Activated CD8-positive, alpha-beta T cell treated with anti-CD3 and anti-CD28 coated beads for 36 hours (primary cell): ENCODE measurements at regions of chr10 and their contacts with region 1.

Region 1: GRCh38 chr10:5977471-5978229 is at the start of gene IL15RA:
- DNase-seq: peak; percentile 94
- ATAC-seq: peak; percentile 73
- H3K4me3 Mint-ChIP-seq: peak within 1 kb of the TSS; percentile 95
- H3K27ac Mint-ChIP-seq: peak within 1 kb of the TSS; percentile 97
- H3K4me1 Mint-ChIP-seq: peaks cover 30% of the 10 kb centered on the region
- H3K27me3 Mint-ChIP-seq: peaks cover 7% of the 10 kb centered on the region
- CTCF ChIP-seq: peak; percentile 15
- total RNA-seq, gene IL15RA: 23.5 to 25.1 TPM

Region 2: GRCh38 chr10:5862360-5862961 is 115.2 kb before region 1 on chr10:
- CTCF ChIA-PET with region 1: no interaction called
- POLR2A ChIA-PET with region 1: no interaction called
- intact Hi-C with region 1: no loop called
- DNase-seq: peak; percentile 27
- ATAC-seq: peak; percentile 55
- H3K4me3 Mint-ChIP-seq: no peak overlapping the region
- H3K27ac Mint-ChIP-seq: peak overlapping the region; percentile 3
- H3K4me1 Mint-ChIP-seq: no peaks in the 10 kb centered on the region
- H3K27me3 Mint-ChIP-seq: no peaks in the 10 kb centered on the region
- CTCF ChIP-seq: no peak

Region 3: GRCh38 chr10:5904227-5904626 is 73.4 kb before region 1 on chr10:
- CTCF ChIA-PET with region 1: no interaction called
- POLR2A ChIA-PET with region 1: no interaction called
- intact Hi-C with region 1: no loop called
- DNase-seq: no peak
- ATAC-seq: no peak
- H3K4me3 Mint-ChIP-seq: no peak overlapping the region
- H3K27ac Mint-ChIP-seq: peak overlapping the region; percentile 75
- H3K4me1 Mint-ChIP-seq: peaks cover 19% of the 10 kb centered on the region
- H3K27me3 Mint-ChIP-seq: no peaks in the 10 kb centered on the region
- CTCF ChIP-seq: no peak

Region 4: DNA sequence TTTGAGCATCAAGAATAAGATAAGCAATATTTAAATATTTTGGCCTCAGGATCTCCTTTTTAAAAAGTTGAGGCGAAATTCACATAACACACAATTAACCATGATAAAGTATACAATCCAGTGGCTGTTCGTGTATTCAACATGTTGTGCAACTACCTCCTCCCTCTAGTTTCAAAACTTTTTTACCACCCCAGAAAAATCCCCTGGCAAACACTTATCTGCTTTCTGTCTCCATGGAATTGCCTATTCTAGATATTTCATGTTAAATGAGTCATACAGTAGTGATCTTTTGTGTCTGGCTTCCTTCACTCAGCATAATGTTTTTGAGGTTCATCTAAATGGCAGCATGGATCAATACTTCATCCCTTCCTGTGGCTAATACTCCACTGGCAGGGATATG is 31.5 kb after region 1 on chr10:
- CTCF ChIA-PET with region 1: interaction called, 3 read pairs
- POLR2A ChIA-PET with region 1: interaction called, 19 read pairs
- intact Hi-C with region 1: no loop called
- DNase-seq: no peak
- ATAC-seq: peak; percentile 26
- H3K4me3 Mint-ChIP-seq: no peak overlapping the region
- H3K27ac Mint-ChIP-seq: no peak overlapping the region
- H3K4me1 Mint-ChIP-seq: peaks cover 31% of the 10 kb centered on the region
- H3K27me3 Mint-ChIP-seq: peaks cover 7% of the 10 kb centered on the region
- CTCF ChIP-seq: no peak

Region 5: GRCh38 chr10:6014241-6014761 is 36.7 kb after region 1 on chr10:
- CTCF ChIA-PET with region 1: interaction called, 3 read pairs
- POLR2A ChIA-PET with region 1: interaction called, 19 read pairs
- intact Hi-C with region 1: no loop called
- DNase-seq: peak; percentile 83
- ATAC-seq: peak; percentile 76
- H3K4me3 Mint-ChIP-seq: no peak overlapping the region
- H3K27ac Mint-ChIP-seq: peak overlapping the region; percentile 89
- H3K4me1 Mint-ChIP-seq: peaks cover 69% of the 10 kb centered on the region
- H3K27me3 Mint-ChIP-seq: no peaks in the 10 kb centered on the region
- CTCF ChIP-seq: peak; percentile 70